Heart left ventricle (tissue), 16 donors: ENCODE measurements at regions of chr15 and their contacts with region 1.

Region 1: DNA sequence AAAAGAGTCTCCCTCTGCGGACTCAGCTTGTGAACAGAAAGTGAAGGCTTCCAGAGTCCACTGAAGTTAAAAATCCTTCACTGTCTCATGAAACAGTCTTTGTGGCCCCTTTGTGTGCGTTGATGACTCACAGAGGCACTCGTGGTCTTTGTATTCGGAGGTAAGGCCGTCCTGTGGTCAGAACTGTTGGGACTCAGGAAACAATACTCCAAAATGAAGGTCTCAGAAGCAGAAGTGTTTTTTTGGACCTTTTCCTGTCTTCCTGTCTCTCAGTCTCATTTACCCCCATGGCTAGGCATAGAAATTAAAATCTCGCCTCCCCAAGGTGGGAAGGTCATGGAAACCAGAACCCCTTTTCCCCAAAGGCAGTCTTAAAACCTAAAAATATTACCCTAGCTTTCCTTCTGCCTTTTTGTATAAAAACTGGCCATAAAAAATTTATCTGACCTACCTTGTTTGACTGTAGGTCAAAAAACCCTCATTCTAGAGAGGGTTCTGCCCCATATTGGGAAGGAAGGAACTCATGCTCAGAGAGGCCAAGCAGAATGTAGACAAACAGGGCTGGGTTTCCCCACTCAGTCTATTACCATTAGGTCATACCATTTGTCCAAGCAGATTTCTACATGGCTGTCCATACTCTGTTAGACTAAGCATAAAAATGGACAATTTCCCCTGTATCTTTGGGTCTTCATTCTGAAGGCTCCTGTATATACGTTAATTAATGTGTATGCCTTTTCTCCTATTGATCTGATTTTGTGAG is 19.1 kb upstream of the EPB42 start:
- DNase-seq: no peak
- ATAC-seq: no peak
- H3K4me3 ChIP-seq: no peak overlapping the region
- H3K27ac ChIP-seq: no peak overlapping the region
- H3K4me1 ChIP-seq: no peaks in the 10 kb centered on the region
- H3K27me3 ChIP-seq: no peaks in the 10 kb centered on the region
- CTCF ChIP-seq: no peak
- POLR2A ChIP-seq: no peak

Region 2: DNA sequence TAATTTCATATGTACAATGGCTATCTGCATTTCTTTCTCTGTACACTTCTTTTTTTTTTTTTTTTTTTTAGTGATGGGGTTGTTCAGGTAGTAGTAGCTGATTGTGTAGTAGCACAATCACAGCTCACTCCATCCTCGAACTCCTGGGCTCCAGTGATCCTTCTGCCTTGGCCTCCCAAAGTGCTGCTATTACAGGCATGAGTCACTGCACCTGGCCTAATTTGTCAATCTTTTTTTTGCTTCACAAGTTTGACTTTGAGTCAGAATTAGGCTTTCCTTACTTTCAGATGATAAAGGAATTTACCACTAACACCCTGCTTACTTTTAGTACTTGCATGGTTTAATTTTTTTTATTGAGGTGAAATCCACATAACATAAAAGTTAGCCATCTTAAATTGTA is 305.5 kb after region 1 on chr15:
- intact Hi-C with region 1: loop called in 1 of 10 experiments (anchors 5 kb)
- DNase-seq: no peak
- ATAC-seq: no peak
- H3K4me3 ChIP-seq: no peak overlapping the region
- H3K27ac ChIP-seq: no peak overlapping the region
- H3K4me1 ChIP-seq: no peaks in the 10 kb centered on the region
- H3K27me3 ChIP-seq: no peaks in the 10 kb centered on the region
- CTCF ChIP-seq: no peak
- POLR2A ChIP-seq: no peak